Motor neuron (in vitro differentiated cells): ENCODE measurements at regions of chr3 and their contacts with region 1.

Region 1: GRCh38 chr3:158109804-158110657 is at the start of gene RSRC1:
- ATAC-seq: peak; percentile 47 to 95 (median 86)
- H3K4me3 ChIP-seq: peak within 1 kb of the TSS; percentile 74 to 97 (median 85)
- H3K27ac ChIP-seq: peak within 1 kb of the TSS; percentile 76 to 77
- H3K4me1 ChIP-seq: peaks cover 4 to 10% of the 10 kb centered on the region in 2 donors
- total RNA-seq, gene RSRC1: 38.3 to 159 (median 45.1) TPM

Region 2: DNA sequence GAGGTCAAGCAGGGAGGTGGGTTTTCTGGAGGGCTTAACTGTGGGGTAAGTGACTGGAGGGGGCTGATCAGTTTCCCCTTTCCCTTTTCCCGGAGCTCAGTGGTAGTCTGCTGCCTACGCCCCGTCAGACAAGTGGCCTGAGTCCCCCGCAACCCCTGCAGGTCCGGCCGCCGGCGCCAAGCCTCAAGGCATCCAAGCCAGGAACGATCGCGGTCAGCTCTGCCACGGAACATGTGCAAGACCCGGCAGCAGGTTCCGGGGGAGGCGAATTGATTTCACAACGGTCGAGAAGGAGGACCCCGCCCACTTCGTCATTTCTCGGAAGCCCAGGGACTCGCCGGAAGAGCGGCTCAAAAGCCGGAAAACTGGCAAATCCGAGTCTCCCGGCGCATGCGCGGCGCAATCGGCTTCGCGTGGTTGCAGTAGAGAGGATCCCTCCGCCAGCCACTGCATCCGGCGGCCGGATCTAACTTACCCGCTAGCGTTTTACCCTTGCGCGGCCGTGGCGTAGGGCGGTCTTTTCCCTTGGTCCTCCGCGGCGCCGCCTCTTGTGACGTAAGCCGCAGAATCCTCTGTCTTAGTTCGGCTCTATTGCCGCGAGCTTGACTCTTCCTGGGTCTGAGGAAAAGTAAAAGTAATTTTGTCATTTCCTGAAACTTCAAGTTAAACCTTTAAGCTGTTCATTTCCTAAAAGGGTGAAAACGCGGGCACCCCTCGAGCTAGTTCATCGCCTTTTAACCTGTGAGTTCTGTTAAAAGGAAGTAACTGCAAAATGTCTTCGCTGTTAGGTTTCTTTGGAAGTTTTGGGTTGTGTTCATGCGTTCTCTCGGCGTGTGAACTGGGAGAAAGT is 935.2 kb before region 1 on chr3:
- in situ Hi-C with region 1: no loop called
- ATAC-seq: peak; percentile 83 to 95 (median 91)
- H3K4me3 ChIP-seq: peak overlapping the region; percentile 46 to 71 (median 52)
- H3K27ac ChIP-seq: peak overlapping the region; percentile 78 to 92
- H3K4me1 ChIP-seq: peaks cover 6 to 7% of the 10 kb centered on the region in 2 donors

Region 3: GRCh38 chr3:157311633-157312375 is 798.2 kb before region 1 on chr3:
- in situ Hi-C with region 1: no loop called
- ATAC-seq: peak in 3 of 8 experiments; percentile 41 to 93 (median 87)
- H3K4me3 ChIP-seq: no peak overlapping the region
- H3K27ac ChIP-seq: no peak overlapping the region
- H3K4me1 ChIP-seq: no peaks in the 10 kb centered on the region

Region 4: DNA sequence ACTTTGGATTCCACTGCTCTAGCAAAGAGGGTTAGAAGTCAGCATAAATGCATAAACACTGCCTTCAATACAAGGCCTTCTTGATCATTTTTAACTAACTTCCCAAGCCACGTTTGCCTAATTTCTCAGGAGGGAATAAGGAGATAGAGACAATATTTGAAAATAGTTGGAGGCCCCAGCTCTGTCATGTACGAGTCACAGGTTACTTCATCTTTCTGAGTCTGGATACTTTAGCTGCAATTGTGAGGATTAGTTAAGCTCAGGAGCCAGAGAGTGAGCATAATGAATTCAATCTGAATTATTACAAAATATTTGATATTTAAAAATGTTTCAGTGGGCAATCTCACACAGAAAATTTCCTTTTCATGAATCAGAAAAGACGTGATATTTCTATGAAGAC is 302.8 kb before region 1 on chr3:
- in situ Hi-C with region 1: no loop called
- ATAC-seq: no peak
- H3K4me3 ChIP-seq: no peak overlapping the region
- H3K27ac ChIP-seq: no peak overlapping the region
- H3K4me1 ChIP-seq: peaks cover 0 to 20% of the 10 kb centered on the region in 2 donors

Region 5: GRCh38 chr3:158313338-158313927 is 203.4 kb after region 1 on chr3:
- in situ Hi-C with region 1: loop called in 1 of 9 experiments (anchors 25 kb)
- ATAC-seq: peak in 5 of 8 experiments; percentile 52 to 70 (median 55)
- H3K4me3 ChIP-seq: no peak overlapping the region
- H3K27ac ChIP-seq: no peak overlapping the region
- H3K4me1 ChIP-seq: peaks cover 0 to 3% of the 10 kb centered on the region in 2 donors

Region 6: DNA sequence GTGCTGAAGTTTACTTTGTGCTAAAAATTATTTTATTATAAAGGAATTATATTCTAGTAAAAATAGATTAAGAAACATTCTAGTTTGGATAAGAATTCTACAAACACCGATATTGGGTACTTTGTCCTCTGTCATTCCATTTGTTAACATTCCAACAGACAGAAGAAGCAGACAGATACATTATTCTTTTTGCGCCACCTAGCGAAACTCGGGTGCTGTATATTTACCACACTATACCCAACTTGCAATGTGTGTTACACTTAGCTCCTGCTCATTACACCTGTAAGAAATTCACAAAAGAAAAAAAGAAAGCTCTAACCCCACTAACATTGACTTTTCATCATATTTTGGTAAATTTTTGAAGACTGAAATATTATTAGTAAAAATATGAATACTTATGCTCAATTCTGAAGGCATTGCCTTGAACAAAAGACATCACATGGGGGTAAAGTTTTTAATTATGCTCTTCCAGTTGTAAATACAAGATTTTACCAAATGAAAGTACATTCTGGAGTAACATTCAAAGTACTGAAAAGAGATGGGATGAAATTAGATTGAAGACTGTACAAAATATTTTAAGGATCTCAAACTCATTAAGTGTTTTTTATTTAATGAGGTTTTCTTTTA is 324.5 kb after region 1 on chr3:
- in situ Hi-C with region 1: loop called in 1 of 9 experiments (anchors 25 kb)
- ATAC-seq: peak; percentile 58 to 97 (median 78)
- H3K4me3 ChIP-seq: no peak overlapping the region
- H3K27ac ChIP-seq: no peak overlapping the region
- H3K4me1 ChIP-seq: peaks cover 6% of the 10 kb centered on the region in 2 donors

Region 7: GRCh38 chr3:158642005-158642404 is 532.0 kb after region 1 on chr3:
- in situ Hi-C with region 1: no loop called
- ATAC-seq: no peak
- H3K4me3 ChIP-seq: no peak overlapping the region
- H3K27ac ChIP-seq: no peak overlapping the region
- H3K4me1 ChIP-seq: peaks cover 5 to 7% of the 10 kb centered on the region in 2 donors